Mammary epithelial cell (primary cell): ENCODE measurements at regions of chr16 and their contacts with region 1.

Region 1: DNA sequence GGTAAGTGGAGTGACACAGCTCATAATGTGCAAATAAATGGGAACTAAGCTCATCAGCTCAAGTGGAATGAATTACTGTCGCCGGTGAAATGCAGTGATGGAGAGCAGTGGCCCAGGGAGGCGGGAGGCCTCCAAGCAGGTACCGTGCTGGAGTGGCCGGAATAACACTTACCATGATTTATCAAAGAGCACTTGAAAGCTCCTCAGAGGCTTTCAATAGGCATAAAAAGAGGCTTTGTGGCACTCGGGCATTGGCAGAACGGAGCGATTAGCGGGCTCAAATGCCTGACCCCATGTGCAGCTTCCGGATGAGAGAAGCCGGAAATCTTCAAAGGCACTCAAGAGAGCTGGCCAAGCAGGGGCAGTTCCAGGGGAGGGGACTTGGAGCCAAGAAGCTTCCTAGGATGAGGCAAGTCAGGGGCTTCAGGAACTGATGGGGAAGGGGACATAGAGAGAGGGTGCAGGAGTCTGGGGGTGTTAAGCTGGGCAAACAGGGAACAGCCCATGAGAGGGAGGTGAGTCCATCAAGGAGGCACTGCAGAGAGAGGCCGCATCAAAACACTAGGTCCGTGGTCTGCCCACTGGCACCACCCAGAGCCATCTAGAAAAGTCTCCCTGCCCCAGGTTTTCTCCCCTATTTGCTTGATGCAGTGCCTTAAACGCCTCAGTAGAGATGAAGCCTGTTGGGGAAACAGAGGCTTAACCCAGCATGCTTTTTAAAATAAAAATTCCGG is 144.0 kb upstream of the IRX6 start:
- DNase-seq: no peak
- H3K4me3 ChIP-seq: no peak overlapping the region
- H3K27ac ChIP-seq: no peak overlapping the region
- H3K4me1 ChIP-seq: no peaks in the 10 kb centered on the region
- H3K27me3 ChIP-seq: no peaks in the 10 kb centered on the region
- CTCF ChIP-seq: no peak

Region 2: GRCh38 chr16:55239723-55240122 is 59.7 kb after region 1 on chr16:
- CTCF ChIA-PET with region 1: no interaction called
- dilution Hi-C with region 1: loop called (anchors 10 kb)
- in situ Hi-C with region 1: no loop called
- intact Hi-C with region 1: no loop called
- DNase-seq: no peak
- H3K4me3 ChIP-seq: no peak overlapping the region
- H3K27ac ChIP-seq: no peak overlapping the region
- H3K4me1 ChIP-seq: no peaks in the 10 kb centered on the region
- H3K27me3 ChIP-seq: no peaks in the 10 kb centered on the region
- CTCF ChIP-seq: no peak